GM18951 (cell line): ENCODE measurements at regions of chr15 and their contacts with region 1.

Region 1: GRCh38 chr15:44836094-44836493 is 99.8 kb downstream of the TRIM69 start:
- POLR2A ChIP-seq: no peak

Region 2: DNA sequence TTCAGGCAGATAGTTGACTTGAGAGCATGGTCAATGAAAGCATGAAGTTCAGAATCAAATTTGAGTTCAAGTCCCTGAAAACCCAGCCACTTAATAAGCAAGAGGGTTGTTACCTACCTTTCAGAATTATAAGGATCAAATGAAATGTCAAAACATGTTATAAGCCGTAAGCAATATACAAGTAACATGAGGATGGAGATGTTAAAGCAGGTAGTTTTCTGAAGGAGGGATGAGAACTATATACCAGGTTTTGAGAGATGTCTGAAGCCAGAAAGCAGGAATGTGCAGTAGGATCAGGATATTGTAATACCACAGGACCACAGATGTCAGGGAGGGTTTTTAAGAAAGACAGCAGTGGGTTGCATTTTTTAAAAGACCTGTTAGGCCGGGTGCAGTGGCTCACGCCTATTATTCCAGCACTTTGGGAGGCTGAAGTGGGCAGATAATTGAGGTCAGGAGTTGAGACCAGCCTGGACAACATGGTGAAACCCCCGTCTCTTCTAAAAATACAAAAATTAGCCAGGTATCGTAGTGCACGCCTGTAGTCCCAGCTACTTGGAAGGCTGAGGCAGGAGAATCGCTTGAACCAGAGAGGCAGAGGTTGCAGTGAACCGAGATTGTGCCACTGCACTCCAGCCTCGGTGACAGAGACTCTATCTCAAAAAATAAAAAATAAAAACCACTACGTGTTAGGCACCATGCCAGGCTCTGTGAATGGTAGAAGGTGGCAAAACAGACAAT is 306.1 kb before region 1 on chr15:
- in situ Hi-C with region 1: no loop called
- POLR2A ChIP-seq: no peak

Region 3: DNA sequence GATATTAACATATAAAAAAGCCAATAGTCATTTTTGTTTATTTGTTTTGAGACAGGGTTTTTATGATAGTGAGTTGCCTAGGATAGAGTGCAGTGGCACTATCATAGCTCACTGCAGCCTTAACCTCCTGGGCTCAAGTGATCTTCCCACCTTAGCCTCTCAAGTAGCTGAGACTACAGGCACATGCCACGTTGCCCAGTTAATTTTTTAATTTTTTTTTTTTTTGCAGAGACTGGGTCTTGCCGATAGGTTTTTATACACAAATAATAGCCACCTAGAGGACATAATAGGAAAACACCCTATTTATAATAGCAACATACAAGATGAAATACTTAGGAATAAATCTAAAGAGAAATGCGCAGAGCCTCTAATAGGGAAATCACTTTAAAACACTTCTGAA is 285.8 kb before region 1 on chr15:
- in situ Hi-C with region 1: no loop called
- POLR2A ChIP-seq: no peak

Region 4: DNA sequence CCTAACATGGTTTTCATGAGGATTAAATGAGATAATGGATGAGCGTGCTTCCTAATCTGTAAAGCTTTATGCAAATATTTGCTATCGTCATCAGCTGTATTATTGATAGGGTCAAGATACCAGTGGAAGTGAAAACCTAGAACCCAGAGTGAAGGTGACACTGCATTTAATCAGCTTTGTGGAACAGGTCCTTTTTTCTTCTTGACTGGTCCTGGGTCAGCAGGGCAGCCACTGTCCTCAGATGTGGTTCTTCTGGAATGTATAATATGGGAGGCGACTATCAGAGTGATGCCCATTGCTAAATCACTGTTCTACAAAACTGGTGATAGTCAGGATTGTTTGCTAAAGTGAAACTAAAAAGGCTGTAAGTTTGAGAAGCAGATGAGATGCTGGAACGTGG is 228.3 kb after region 1 on chr15:
- in situ Hi-C with region 1: loop called (anchors 5 kb)
- POLR2A ChIP-seq: no peak